HepG2 (cell line): ENCODE measurements at regions of chr3 and their contacts with region 1.

Region 1: GRCh38 chr3:61768284-61769037 is 207.1 kb downstream of the PTPRG start:
- DNase-seq: no peak
- ATAC-seq: no peak
- H3K4me3 ChIP-seq: no peak overlapping the region
- H3K27ac ChIP-seq: no peak overlapping the region
- H3K4me1 ChIP-seq: peaks cover 9% of the 10 kb centered on the region; the same call in 1 of the 2 replicates
- H3K27me3 ChIP-seq: no peaks in the 10 kb centered on the region
- CTCF ChIP-seq: no peak
- EP300 ChIP-seq: no peak
- POLR2A ChIP-seq: no peak
- RAD21 ChIP-seq: no peak

Region 2: GRCh38 chr3:61574854-61575253 is 193.6 kb before region 1 on chr3:
- CTCF ChIA-PET with region 1: no interaction called
- POLR2A ChIA-PET with region 1: no interaction called
- in situ Hi-C with region 1: no loop called
- intact Hi-C with region 1: no loop called
- DNase-seq: no peak
- ATAC-seq: no peak
- H3K4me3 ChIP-seq: no peak overlapping the region
- H3K27ac ChIP-seq: no peak overlapping the region
- H3K4me1 ChIP-seq: peaks cover 27% of the 10 kb centered on the region
- H3K27me3 ChIP-seq: no peaks in the 10 kb centered on the region
- CTCF ChIP-seq: no peak
- EP300 ChIP-seq: no peak
- POLR2A ChIP-seq: no peak
- RAD21 ChIP-seq: no peak

Region 3: DNA sequence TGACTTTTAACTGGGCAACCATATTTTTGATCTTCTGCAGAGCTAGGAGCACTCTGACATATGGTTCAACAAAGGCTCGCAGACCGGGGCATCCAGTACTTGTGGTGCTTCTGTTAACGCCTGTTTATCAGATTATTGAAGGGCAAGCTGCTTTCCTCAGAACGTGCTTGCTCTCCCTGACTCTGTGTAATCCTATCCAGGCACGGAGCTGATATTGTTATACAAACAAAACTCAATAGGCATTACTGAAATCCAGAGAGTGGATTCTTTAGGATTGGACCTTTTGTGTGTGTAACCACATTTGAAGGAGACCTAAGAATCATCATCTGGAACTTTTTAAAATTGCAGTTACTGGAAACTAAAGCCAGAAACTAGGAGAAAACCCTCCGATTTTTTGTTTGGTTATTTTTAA is 39.4 kb after region 1 on chr3:
- CTCF ChIA-PET with region 1: no interaction called
- POLR2A ChIA-PET with region 1: no interaction called
- in situ Hi-C with region 1: no loop called
- intact Hi-C with region 1: loop called (anchors 1 kb)
- DNase-seq: peak; percentile 39
- ATAC-seq: peak; percentile 80
- H3K4me3 ChIP-seq: no peak overlapping the region
- H3K27ac ChIP-seq: no peak overlapping the region
- H3K4me1 ChIP-seq: peaks cover 40% of the 10 kb centered on the region
- H3K27me3 ChIP-seq: no peaks in the 10 kb centered on the region
- CTCF ChIP-seq: no peak
- EP300 ChIP-seq: no peak
- POLR2A ChIP-seq: no peak
- RAD21 ChIP-seq: no peak